A673 (cell line): ENCODE measurements at regions of chrX and their contacts with region 1.

Region 1: DNA sequence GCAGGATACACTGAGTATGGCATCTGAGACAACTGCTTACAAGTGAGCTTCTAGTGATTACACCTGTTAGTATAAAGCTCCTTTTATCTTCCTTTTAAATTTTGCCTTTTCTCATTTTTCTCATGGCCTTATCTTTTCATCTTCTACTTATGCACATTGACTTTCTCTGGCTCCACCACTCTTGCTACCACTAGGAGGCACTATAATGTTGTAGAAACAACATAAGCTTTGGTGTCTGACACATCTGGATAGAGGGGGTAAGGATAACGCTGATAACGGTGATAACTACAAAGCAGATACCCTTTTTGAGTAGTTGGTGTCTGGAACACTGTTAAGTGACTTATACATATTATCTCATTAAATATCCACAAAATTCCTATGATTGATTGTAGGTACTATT is 187.4 kb upstream of the TEX13C start:
- DNase-seq: peak; percentile 68
- H3K4me3 ChIP-seq: no peak overlapping the region
- H3K27ac ChIP-seq: no peak overlapping the region
- H3K4me1 ChIP-seq: no peaks in the 10 kb centered on the region
- H3K27me3 ChIP-seq: no peaks in the 10 kb centered on the region
- CTCF ChIP-seq: peak; percentile 79

Region 2: GRCh38 chrX:124388562-124388961 is 743.7 kb before region 1 on chrX:
- CTCF ChIA-PET with region 1: interaction called, 3 read pairs
- POLR2A ChIA-PET with region 1: no interaction called
- intact Hi-C with region 1: loop called (anchors 5 kb)
- DNase-seq: peak; percentile 71
- H3K4me3 ChIP-seq: no peak overlapping the region
- H3K27ac ChIP-seq: no peak overlapping the region
- H3K4me1 ChIP-seq: no peaks in the 10 kb centered on the region
- H3K27me3 ChIP-seq: no peaks in the 10 kb centered on the region
- CTCF ChIP-seq: peak; percentile 73

Region 3: DNA sequence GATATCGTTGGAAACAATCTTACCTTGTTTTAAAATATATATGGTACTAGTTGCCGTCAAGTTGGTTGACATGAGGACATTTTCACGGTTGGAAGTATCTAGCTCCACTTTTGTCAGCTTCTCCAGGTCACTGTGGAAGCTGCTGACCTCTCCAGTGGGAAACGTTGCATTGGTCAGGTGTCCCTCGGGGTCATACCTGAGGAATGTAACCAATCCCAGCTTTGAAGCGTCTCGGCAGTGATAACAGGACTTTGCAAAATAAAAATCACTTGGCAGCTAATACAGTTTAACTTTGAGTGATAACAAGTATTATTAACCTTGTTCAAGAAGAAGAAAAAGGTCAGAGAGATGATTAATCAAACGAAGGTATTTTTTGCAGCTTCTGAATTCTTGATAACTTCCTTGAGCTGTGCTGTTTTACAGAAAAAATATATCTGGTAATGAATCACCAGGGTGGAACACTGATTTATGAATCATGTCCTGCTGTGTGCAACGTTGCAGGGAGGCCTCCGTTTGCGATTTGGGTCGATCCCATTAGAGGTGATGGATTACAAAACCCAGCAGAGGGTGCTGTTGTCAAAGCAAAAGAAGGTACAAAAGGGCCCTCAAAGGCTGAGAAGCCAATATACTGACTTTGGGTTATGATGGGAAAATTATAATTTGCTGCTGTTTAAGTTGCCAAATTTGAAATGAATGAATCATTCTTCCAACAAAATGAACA is 725.8 kb before region 1 on chrX:
- CTCF ChIA-PET with region 1: interaction called, 3 read pairs
- POLR2A ChIA-PET with region 1: no interaction called
- intact Hi-C with region 1: loop called (anchors 2 kb)
- DNase-seq: peak; percentile 85
- H3K4me3 ChIP-seq: no peak overlapping the region
- H3K27ac ChIP-seq: no peak overlapping the region
- H3K4me1 ChIP-seq: no peaks in the 10 kb centered on the region
- H3K27me3 ChIP-seq: no peaks in the 10 kb centered on the region
- CTCF ChIP-seq: peak; percentile 67

Region 4: DNA sequence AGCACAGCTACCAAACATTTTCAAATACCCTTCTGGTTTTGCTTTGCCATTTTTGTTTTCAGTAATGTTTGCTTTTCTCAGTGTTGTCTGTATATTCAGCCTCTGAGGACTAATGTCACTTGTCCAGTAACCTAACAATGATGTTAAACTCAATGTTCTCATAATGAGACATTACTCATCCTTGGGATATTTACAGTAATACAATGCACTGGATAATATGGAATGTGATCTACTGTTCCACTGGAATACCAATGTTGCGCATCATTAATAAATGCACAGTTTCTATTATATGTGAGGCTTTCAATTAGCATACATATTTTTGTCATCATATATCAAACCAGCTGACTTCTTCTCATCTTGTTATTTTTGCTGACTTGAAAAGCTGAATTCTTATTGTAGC is 526.8 kb before region 1 on chrX:
- CTCF ChIA-PET with region 1: no interaction called
- POLR2A ChIA-PET with region 1: no interaction called
- intact Hi-C with region 1: no loop called
- DNase-seq: no peak
- H3K4me3 ChIP-seq: no peak overlapping the region
- H3K27ac ChIP-seq: no peak overlapping the region
- H3K4me1 ChIP-seq: no peaks in the 10 kb centered on the region
- H3K27me3 ChIP-seq: no peaks in the 10 kb centered on the region
- CTCF ChIP-seq: no peak

Region 5: DNA sequence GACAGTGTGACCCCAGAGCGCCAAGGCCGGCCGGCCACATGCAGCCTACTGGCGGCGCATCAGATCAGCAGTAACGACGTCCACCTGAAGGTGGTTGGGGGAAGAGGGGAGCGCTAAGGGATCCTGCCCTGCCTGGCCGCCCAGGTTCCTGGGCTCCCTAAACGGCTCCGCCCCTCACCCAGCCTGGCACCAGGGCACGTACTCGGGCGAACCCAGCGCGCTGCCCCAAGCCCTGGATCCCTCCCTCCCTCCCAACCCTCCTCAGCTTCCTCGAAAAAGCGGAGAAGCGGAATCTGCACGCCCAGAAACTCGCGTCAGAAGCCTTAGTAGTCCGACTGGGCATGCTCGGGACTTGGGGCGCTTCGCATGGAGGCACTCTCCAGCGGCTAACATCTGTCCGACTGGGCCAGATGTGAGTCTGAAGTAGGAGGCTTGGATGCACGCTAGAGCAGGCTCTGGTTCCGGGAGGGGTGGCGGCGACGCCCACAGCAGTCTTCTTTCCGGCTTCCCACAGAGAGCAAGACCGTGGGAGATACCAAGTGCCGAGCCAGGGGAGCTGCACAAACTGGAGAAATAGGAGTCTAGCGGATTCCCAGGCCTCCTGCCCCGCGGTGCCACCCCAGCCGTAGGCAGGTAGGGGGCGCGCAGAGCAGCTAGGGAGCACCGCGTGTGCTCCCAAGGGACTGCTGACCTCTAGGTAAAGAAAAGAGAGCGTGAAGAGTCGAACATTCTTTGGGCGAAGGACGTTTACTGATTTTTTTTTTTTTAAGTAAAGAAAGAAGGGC is 73.0 kb after region 1 on chrX:
- CTCF ChIA-PET with region 1: no interaction called
- POLR2A ChIA-PET with region 1: no interaction called
- intact Hi-C with region 1: loop called (anchors 2 kb)
- DNase-seq: peak; percentile 95
- H3K4me3 ChIP-seq: peak overlapping the region; percentile 72
- H3K27ac ChIP-seq: peak overlapping the region; percentile 76
- H3K4me1 ChIP-seq: peaks cover 16% of the 10 kb centered on the region
- H3K27me3 ChIP-seq: no peaks in the 10 kb centered on the region
- CTCF ChIP-seq: peak; percentile 53

Region 6: DNA sequence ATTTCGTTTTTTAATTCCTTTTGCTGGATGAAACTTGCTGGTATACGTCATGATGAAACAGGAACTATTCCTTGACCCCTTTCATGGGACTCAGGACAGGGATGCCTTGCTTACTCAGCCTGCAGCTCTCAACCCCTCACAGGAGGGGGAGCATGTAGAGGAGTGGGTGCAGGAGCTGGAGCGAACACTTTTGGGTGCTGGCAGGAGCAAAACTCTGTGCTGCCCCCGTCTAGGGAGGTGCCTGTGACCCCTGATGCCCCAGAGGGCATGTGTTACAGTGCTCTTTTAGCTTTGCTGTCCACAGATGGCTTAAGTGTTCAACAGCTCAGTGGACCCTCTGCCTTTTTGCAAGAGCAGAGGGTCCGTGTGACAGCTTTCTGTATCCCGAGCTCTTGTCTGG is 130.6 kb after region 1 on chrX:
- CTCF ChIA-PET with region 1: no interaction called
- POLR2A ChIA-PET with region 1: no interaction called
- intact Hi-C with region 1: no loop called
- DNase-seq: no peak
- H3K4me3 ChIP-seq: no peak overlapping the region
- H3K27ac ChIP-seq: no peak overlapping the region
- H3K4me1 ChIP-seq: no peaks in the 10 kb centered on the region
- H3K27me3 ChIP-seq: no peaks in the 10 kb centered on the region
- CTCF ChIP-seq: no peak

Region 7: DNA sequence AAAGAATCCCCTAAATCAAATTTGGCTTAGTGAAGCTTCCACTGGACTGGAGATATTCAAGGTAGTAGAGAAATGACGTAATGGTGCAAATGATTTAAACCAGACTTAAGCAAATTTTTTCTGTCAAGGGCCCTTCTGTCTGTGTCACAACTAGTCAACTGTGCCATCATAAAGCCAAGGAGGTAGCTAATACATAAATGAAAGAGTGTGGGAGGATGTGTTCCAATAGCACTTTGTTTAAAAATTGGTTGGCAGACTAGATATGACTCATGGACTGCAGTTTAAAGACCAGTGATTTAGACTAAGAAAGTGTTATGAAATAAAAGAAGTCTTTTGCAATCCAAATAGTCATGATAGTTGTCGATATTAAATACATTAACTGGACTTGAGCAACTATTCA is 163.1 kb after region 1 on chrX:
- CTCF ChIA-PET with region 1: no interaction called
- POLR2A ChIA-PET with region 1: no interaction called
- intact Hi-C with region 1: no loop called
- DNase-seq: peak; percentile 26
- H3K4me3 ChIP-seq: no peak overlapping the region
- H3K27ac ChIP-seq: no peak overlapping the region
- H3K4me1 ChIP-seq: no peaks in the 10 kb centered on the region
- H3K27me3 ChIP-seq: no peaks in the 10 kb centered on the region
- CTCF ChIP-seq: no peak

Region 8: DNA sequence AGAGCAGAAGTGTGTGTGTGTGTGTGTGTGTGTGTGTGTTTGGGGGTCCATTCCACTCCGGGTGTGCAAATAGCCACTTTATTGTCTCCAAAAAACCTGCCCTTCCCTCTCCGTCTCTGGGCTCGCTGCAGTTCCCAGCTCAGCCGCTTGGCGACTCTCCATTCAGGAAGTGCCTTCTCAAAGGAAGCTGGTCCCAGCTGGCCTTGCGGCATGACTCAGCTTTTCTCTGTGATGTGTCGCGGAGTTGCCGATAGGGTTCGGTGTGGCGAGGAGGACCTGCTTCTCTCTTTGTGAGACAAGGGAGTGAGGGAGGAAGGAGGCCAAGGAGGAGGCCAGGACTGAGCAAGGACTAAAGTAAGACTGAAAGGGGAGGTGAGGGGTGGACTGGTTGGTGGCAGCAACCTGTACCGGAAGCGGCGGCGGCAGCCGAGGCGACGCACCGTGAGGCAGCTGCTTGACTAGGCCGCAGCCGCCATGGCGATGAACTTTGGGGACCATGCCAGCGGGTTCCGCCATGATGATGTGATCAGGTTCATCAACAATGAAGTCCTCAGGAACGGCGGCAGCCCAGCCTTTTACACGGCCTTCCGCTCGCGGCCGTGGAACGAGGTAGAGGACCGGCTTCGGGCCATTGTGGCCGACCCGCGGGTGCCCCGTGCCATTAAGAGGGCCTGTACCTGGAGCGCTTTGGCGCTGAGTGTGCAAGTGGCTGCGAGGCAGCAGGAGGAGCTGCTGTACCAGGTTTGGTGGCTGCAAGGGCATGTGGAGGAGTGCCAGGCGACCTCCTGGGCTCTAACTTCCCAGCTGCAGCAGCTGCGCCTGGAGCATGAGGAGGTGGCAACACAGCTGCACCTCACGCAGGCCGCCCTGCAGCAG is 187.6 kb after region 1 on chrX and contains the start of gene TEX13C:
- CTCF ChIA-PET with region 1: no interaction called
- POLR2A ChIA-PET with region 1: no interaction called
- intact Hi-C with region 1: loop called (anchors 10 kb)
- DNase-seq: peak; percentile 10
- H3K4me3 ChIP-seq: no peak within 1 kb of the TSS
- H3K27ac ChIP-seq: no peak within 1 kb of the TSS
- H3K4me1 ChIP-seq: no peaks in the 10 kb centered on the region
- H3K27me3 ChIP-seq: no peaks in the 10 kb centered on the region
- CTCF ChIP-seq: no peak
- total RNA-seq, gene TEX13C: 0.07 TPM in 1 of 2 replicates, not detected in the other